GM10248 (cell line): ENCODE measurements at regions of chr12 and their contacts with region 1.

Region 1: DNA sequence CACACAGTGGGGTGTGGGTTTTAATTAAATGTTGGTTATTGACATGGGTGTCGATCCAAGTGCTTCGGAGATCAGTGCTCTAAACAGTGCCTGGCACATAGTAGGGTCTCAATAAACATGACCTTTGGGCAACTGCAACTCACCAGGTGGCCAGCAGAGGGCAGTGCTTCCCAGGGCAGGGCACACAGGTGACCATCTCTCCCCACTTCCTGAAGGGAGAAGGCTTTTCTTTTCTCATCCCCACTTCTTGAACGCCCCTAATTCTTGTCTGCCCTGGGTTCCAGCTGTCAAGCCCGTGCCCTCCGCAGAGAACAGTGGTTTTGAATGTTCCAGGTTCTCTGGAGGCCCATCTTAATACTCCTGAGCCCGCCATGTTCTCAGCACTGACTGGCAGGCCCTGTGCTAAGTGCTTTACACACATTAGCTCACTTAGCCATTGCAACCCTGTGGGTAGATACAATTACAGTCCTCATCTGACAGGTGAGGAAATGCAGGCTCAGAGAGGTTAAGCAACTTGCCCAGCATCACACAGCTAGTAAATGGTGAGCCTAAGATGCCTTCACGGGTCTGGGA is 16.3 kb downstream of the RAPGEF3 start:
- DNase-seq: peak; percentile 64
- CTCF ChIP-seq: peak; percentile 92

Region 2: DNA sequence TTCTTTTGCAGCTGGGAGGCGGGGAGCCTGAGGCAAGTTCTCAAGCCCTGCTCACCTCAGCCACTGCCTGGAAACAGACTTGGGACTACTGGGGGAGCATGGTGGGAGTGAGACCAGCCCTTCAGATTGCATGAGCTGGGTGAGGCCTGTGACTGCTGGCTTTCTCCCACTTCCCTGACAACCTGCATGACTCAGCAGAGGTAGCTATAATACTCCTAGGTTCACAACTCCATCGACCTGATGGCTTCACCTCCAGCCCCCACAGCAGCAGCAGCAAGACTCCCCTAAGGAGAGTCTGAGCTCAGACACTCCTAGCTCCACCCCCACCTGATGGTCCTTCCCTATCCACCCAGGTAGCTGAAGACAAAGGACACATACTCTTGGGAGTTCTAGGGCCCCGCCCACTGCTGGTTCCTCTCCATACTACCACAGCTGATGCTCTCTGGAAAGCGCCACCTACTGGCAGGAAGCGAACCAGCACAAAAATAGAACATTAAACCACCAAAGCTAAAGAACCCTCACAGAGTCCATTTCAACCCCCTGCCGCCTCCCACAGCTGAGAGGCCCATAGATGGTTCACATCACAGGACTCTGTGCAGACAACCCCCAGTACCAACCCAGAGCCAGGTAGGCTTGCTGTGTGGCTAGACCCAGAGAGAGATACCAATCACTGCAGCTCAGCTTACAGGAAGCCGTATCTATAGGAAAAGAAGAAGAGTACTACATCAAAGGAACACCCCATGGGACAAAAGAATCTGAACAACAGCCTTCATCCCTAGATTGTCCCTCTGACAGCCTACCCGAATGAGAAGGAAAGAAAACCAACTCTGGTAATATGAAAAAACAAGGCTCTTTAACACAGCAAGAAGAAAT is 105.2 kb before region 1 on chr12:
- CTCF ChIA-PET with region 1: no interaction called
- POLR2A ChIA-PET with region 1: no interaction called
- DNase-seq: no peak
- CTCF ChIP-seq: peak; percentile 37

Region 3: DNA sequence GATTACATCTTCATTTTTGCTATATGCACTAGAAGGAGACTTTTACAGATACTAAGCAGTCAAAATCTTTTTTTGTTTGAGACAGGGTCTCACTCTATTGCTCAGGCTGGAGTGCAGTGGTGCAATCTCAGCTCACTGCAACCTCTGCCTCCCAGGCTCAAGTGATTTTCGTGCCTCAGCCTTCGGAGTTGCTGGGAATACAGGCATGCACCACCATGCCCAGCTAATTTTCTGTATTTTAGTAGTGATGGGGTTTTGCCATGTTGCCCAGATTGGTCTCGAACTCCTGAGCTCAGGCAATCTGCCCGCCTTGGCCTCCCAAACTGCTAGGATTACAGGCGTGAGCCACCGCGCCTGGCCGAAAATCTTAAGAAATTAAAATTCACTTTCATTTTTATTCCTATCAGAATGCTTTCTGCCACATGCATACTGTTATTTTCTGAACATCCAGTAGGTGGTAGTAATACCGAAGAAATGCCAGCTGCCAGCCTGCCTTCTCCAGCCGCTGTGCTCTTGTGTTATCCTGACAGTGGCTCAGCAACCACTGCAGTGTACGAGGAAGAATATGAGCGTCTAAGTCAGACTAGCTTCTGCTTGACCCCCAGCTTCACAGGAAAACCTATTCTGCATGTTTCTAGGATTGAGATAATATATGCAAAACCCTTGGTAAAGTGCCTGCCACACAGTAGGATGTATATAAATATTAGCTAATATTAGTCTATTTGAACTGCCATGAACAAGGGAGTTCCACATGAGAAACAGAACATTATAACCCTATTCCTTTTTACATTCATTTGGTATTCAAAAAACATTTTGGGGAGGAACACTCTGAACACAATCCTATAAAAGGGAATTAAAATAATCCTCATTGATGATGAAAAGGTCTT is 90.7 kb before region 1 on chr12:
- CTCF ChIA-PET with region 1: interaction called, 23 read pairs
- POLR2A ChIA-PET with region 1: no interaction called
- DNase-seq: peak; percentile 34
- CTCF ChIP-seq: peak; percentile 56

Region 4: DNA sequence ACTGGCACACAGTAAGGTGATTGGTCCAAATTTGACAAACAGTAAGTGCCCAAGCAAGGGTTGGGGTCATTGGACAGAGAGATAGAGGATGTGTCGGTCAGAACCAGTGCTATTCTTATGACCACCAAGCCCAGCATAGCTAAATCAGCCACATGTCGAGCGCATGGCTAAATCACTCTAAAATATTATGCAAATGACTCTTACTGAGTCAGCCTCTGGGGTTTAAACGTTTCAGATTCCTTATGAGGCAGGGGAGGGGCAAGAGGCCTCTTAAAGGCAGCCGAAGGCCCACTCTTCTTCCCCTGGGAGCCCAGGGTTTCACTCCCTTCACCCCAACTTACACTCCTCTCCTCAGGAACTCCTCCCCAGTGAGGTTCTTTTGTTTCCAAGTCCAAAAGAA is 16.4 kb before region 1 on chr12:
- CTCF ChIA-PET with region 1: interaction called, 225 read pairs
- POLR2A ChIA-PET with region 1: interaction called, 4 read pairs
- DNase-seq: peak; percentile 67
- CTCF ChIP-seq: no peak

Region 5: DNA sequence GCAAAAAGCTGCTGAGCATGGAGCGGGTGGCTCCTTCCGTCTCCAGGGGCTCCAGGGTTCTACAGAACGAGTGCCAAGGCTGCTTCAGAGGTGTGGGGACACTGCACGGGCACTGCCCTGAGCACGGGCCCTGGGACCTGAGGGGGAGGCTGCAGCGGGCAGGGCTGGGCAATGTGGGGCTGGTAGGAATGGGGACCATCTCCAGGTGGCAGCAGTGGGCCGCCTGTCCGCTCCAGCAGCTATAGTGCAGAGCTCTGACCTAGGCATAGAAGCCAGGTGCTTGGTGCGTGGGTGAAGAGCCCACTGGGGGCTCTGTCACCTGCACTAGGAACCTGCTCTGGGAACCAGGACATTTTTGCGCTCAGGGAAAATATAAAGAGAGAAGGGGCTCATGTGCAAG is 55.1 kb after region 1 on chr12:
- CTCF ChIA-PET with region 1: interaction called, 1,524 read pairs
- POLR2A ChIA-PET with region 1: no interaction called
- DNase-seq: peak; percentile 74
- CTCF ChIP-seq: peak; percentile 57

Region 6: GRCh38 chr12:47819896-47820630 is 77.7 kb after region 1 on chr12 and contains the start of gene HDAC7:
- CTCF ChIA-PET with region 1: interaction called, 26 read pairs
- POLR2A ChIA-PET with region 1: no interaction called
- DNase-seq: peak; percentile 80
- CTCF ChIP-seq: no peak